Breast epithelium (tissue), 4 donors: ENCODE measurements at regions of chr19 and their contacts with region 1.

Region 1: GRCh38 chr19:43316592-43317319 is 36.7 kb upstream of the CD177 start:
- DNase-seq: no peak
- H3K4me3 ChIP-seq: no peak overlapping the region
- H3K27ac ChIP-seq: no peak overlapping the region
- H3K4me1 ChIP-seq: no peaks in the 10 kb centered on the region
- H3K27me3 ChIP-seq: no peaks in the 10 kb centered on the region
- CTCF ChIP-seq: no peak
- POLR2A ChIP-seq: no peak

Region 2: DNA sequence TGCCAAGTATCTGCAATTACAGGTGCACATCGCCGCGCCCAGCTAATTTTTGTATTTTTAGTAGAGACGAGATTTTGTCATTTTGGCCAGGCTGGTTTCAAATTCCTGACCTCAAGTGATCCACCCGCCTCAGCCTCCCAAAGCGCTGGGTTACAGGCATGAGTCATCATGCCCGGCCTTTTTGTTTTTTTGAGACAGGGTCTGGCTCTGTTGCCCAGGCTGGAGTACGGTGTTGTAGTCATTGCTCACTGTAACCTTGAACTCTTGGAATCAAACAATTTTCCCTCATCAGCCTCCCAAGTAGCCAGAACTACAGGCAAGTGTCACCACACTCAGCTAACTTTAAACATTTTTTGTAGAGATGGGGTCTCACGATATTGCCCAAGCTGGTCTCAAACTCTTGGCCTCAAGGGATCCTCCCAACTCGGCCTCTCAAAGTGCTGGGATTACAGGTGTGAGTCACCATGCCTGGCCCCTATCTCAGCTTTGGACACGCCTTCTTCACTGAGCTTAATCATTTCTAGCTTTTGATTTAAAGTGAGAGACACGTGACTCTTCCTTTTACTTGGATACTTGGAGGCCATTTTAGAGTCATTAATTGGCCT is 395.1 kb after region 1 on chr19:
- intact Hi-C with region 1: loop called (anchors 10 kb)
- DNase-seq: no peak
- H3K4me3 ChIP-seq: no peak overlapping the region
- H3K27ac ChIP-seq: no peak overlapping the region
- H3K4me1 ChIP-seq: no peaks in the 10 kb centered on the region
- H3K27me3 ChIP-seq: no peaks in the 10 kb centered on the region
- CTCF ChIP-seq: no peak
- POLR2A ChIP-seq: no peak